ENCODE measurements at regions of chr3 and their contacts with region 1.

Region 1: DNA sequence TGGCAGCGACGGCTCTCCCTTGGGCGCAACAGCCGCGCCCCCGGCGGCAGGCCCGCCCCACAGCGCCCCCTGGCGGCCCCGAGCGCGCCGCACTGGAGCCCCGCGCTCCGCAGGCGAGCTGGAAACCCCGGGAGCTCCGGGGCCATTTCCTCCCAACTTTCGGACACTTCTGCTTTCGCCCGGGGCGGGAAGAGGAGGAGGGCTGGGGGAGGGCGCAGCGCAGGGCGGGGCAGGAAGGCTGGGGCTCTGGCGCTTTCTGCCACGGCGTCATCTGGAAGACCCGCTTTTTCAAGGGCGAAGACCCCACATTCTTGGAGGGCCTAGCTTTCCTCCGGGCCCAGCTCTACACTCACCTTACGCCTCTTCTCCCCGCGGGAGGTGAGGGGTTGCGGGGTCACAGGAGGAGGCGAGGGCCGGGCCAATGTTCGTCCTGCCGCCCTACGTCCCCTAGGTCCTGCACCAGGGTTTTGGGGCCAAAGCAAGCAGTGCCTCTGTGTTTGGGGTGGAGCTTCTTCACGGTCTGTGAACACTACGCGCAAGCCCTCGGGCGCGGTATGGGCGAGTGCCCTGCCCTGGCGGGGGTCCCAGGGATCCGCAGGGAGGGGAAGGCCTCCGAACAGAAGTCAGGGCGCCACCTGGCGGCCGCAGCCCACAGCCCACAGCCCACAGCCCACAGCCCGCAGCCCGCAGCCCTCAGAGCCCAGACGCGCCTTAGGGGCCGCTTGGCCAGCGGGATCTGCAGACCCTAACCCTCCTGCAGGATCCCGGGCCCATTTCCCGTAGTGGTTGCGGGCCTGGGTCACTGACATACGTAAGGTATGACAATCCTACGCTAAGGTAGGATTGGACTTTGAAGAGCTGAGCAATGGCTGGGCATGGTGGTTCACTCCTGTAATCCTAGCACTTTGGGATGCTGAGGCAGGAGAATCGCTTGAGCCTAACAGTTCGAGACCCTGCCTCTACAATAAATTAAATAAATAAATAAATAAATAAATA is 31.1 kb downstream of the FOXL2 start:
- DNase-seq: peak; percentile 90 to 94
- H3K4me3 ChIP-seq: peak overlapping the region; percentile 62
- H3K4me3 Mint-ChIP-seq: peak overlapping the region; percentile 73
- H3K27ac Mint-ChIP-seq: peak overlapping the region; percentile 30
- H3K4me1 ChIP-seq: 0 out of 2 replicates have a peak, but pooled peaks cover 3% of the 10 kb centered on the region
- H3K4me1 Mint-ChIP-seq: no peaks in the 10 kb centered on the region
- H3K27me3 ChIP-seq: no peaks in the 10 kb centered on the region
- H3K27me3 Mint-ChIP-seq: no peaks in the 10 kb centered on the region
- CTCF ChIP-seq: peak; percentile 84 to 93

Region 2: DNA sequence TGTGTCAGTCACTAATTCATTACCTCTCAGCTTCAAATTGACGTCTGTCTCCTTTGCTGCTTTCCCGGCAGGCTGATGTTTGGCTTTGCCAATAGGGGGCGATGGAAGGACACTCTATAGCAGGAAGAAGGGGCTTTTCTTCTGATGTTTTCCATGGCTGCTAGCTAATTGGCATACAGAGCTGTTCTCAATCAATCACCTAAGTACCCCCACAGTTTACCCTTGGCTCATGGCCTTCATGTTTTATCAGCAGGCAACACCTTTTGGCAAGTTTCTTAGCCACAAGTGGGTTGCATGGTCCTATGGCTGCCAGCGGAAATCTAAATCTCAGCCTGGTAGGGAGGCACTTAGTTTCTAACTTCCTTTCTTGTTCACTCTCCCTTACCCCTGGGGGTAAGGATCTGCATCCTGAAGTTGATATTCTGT is 436.4 kb before region 1 on chr3:
- CTCF ChIA-PET with region 1: interaction called, 12 read pairs
- POLR2A ChIA-PET with region 1: no interaction called
- intact Hi-C with region 1: loop called (anchors 1 kb)
- DNase-seq: peak in 1 of 2 experiments; percentile 60
- H3K4me3 ChIP-seq: no peak overlapping the region
- H3K4me3 Mint-ChIP-seq: no peak overlapping the region
- H3K27ac Mint-ChIP-seq: no peak overlapping the region
- H3K4me1 ChIP-seq: no peaks in the 10 kb centered on the region
- H3K4me1 Mint-ChIP-seq: no peaks in the 10 kb centered on the region
- H3K27me3 ChIP-seq: no peaks in the 10 kb centered on the region
- H3K27me3 Mint-ChIP-seq: no peaks in the 10 kb centered on the region
- CTCF ChIP-seq: peak; percentile 71 to 81

Region 3: GRCh38 chr3:138686771-138687221 is 229.0 kb before region 1 on chr3:
- CTCF ChIA-PET with region 1: interaction called, 22 read pairs
- POLR2A ChIA-PET with region 1: no interaction called
- intact Hi-C with region 1: loop called (anchors 2 kb)
- DNase-seq: peak in 1 of 2 experiments; percentile 46
- H3K4me3 ChIP-seq: no peak overlapping the region
- H3K4me3 Mint-ChIP-seq: no peak overlapping the region
- H3K27ac Mint-ChIP-seq: no peak overlapping the region
- H3K4me1 ChIP-seq: peaks cover 22% of the 10 kb centered on the region
- H3K4me1 Mint-ChIP-seq: peaks cover 19% of the 10 kb centered on the region
- H3K27me3 ChIP-seq: no peaks in the 10 kb centered on the region
- H3K27me3 Mint-ChIP-seq: no peaks in the 10 kb centered on the region
- CTCF ChIP-seq: no peak

Region 4: GRCh38 chr3:138824114-138824506 is 91.7 kb before region 1 on chr3:
- CTCF ChIA-PET with region 1: interaction called, 57 read pairs
- POLR2A ChIA-PET with region 1: interaction called, 5 read pairs
- intact Hi-C with region 1: loop called (anchors 2 kb)
- DNase-seq: peak; percentile 37 to 47
- H3K4me3 ChIP-seq: no peak overlapping the region
- H3K4me3 Mint-ChIP-seq: no peak overlapping the region
- H3K27ac Mint-ChIP-seq: peak overlapping the region; percentile 81
- H3K4me1 ChIP-seq: peaks cover 27% of the 10 kb centered on the region
- H3K4me1 Mint-ChIP-seq: peaks cover 10% of the 10 kb centered on the region
- H3K27me3 ChIP-seq: no peaks in the 10 kb centered on the region
- H3K27me3 Mint-ChIP-seq: no peaks in the 10 kb centered on the region
- CTCF ChIP-seq: no peak

Region 5: DNA sequence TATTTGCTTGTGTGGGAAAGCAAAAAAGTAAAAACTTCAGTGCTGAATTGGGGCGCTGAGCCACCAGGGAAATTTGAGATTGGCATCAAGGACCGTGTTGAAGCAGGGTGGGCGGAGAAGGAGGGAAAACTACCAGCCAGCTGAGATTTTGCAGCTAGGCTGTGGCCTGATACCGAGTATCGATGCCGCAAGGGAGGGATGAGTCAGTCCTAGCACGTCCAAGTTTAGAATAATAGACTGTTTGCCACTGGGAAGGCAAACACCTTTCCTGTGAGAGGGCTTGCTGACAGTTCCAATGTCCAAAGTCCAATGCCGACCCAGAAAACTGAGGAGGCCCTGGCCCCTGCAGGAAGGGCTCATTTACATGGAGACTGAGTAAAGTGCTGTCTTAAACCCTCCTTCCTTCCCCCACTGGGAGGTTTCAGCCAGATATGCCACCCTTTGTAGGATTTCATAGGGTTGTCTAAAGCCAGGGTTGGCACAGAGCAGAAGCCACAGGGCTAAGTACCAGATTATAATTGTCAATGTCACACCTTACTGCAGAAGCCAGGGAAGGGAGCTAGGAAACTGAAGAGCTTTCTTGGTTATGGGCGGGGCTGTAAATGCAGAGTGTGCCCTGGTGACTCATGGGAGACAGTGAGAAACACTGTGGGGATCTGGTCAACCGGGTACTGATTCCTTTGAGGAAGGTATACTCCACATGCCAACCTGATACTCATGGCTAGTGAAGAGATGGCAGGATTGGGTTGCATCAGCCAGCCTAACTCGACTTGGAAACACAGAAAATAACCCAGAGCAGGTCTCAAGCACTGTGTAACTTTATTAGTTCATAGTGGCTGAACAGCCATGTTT is 52.7 kb before region 1 on chr3:
- CTCF ChIA-PET with region 1: interaction called, 47 read pairs
- POLR2A ChIA-PET with region 1: interaction called, 17 read pairs
- intact Hi-C with region 1: loop called (anchors 1 kb)
- DNase-seq: peak; percentile 89 to 93
- H3K4me3 ChIP-seq: no peak overlapping the region; the same call in 1 of the 2 replicates
- H3K4me3 Mint-ChIP-seq: peak overlapping the region; percentile 67
- H3K27ac Mint-ChIP-seq: peak overlapping the region; percentile 97
- H3K4me1 ChIP-seq: peaks cover 27% of the 10 kb centered on the region
- H3K4me1 Mint-ChIP-seq: peaks cover 25% of the 10 kb centered on the region
- H3K27me3 ChIP-seq: no peaks in the 10 kb centered on the region
- H3K27me3 Mint-ChIP-seq: no peaks in the 10 kb centered on the region
- CTCF ChIP-seq: no peak

Region 6: GRCh38 chr3:139620438-139620837 is 704.6 kb after region 1 on chr3:
- CTCF ChIA-PET with region 1: no interaction called
- POLR2A ChIA-PET with region 1: no interaction called
- intact Hi-C with region 1: no loop called
- DNase-seq: no peak
- H3K4me3 ChIP-seq: no peak overlapping the region
- H3K4me3 Mint-ChIP-seq: no peak overlapping the region
- H3K27ac Mint-ChIP-seq: no peak overlapping the region
- H3K4me1 ChIP-seq: no peaks in the 10 kb centered on the region
- H3K4me1 Mint-ChIP-seq: no peaks in the 10 kb centered on the region
- H3K27me3 ChIP-seq: no peaks in the 10 kb centered on the region
- H3K27me3 Mint-ChIP-seq: no peaks in the 10 kb centered on the region
- CTCF ChIP-seq: no peak